Gastrocnemius medialis (tissue), 4 donors: ENCODE measurements at regions of chr4 and their contacts with region 1.

Region 1: DNA sequence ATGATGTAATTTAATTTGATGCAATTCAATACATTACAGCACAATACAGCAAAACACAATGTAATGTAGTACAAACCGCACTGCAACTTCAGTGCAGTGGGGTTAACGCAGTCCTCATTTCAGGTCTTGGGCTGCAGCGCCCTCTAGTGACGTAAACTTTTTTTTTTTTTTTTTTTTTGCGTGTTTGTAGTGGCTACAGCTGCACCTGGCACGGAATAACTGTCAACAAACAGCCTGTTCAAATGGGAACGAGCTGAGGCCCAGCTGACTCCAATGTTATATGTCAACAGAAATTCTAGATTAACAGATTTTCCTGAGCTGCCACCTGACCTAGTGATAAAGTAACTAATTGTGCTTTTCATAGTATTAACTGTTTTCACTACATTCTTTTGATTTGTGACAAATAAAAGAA is 33.5 kb upstream of the RASSF6 start:
- DNase-seq: peak in 1 of 2 donors; percentile 13
- ATAC-seq: peak; percentile 46 to 62
- H3K4me3 ChIP-seq: no peak overlapping the region
- H3K27ac ChIP-seq: no peak overlapping the region
- H3K4me1 ChIP-seq: no peaks in the 10 kb centered on the region
- H3K27me3 ChIP-seq: no peaks in the 10 kb centered on the region
- CTCF ChIP-seq: peak in 4 of 5 experiments; percentile 30 to 64 (median 52)
- POLR2A ChIP-seq: no peak

Region 2: GRCh38 chr4:73308286-73308685 is 345.4 kb before region 1 on chr4:
- in situ Hi-C with region 1: loop called in 2 of 4 experiments (anchors 25 kb)
- intact Hi-C with region 1: loop called (anchors 5 kb)
- DNase-seq: no peak
- ATAC-seq: no peak
- H3K4me3 ChIP-seq: no peak overlapping the region
- H3K27ac ChIP-seq: no peak overlapping the region
- H3K4me1 ChIP-seq: no peaks in the 10 kb centered on the region
- H3K27me3 ChIP-seq: no peaks in the 10 kb centered on the region
- CTCF ChIP-seq: peak in 1 of 5 experiments; percentile 7
- POLR2A ChIP-seq: no peak

Region 3: GRCh38 chr4:73341454-73341853 is 312.2 kb before region 1 on chr4:
- in situ Hi-C with region 1: no loop called
- intact Hi-C with region 1: loop called (anchors 5 kb)
- DNase-seq: no peak
- ATAC-seq: no peak
- H3K4me3 ChIP-seq: no peak overlapping the region
- H3K27ac ChIP-seq: no peak overlapping the region
- H3K4me1 ChIP-seq: no peaks in the 10 kb centered on the region
- H3K27me3 ChIP-seq: no peaks in the 10 kb centered on the region
- CTCF ChIP-seq: peak in 1 of 5 experiments; percentile 18
- POLR2A ChIP-seq: no peak